ENCODE measurements at regions of chr20 and their contacts with region 1.

Region 1: GRCh38 chr20:15654208-15654645 is 919.0 kb downstream of the KIF16B start:
- DNase-seq: peak in 2 of 10 donors; percentile 26 to 39
- H3K4me3 ChIP-seq: no peak overlapping the region
- H3K27ac ChIP-seq: no peak overlapping the region
- H3K27me3 ChIP-seq: no peaks in the 10 kb centered on the region
- CTCF ChIP-seq: peak in 55 of 56 donors; percentile 24 to 78 (median 64)

Region 2: DNA sequence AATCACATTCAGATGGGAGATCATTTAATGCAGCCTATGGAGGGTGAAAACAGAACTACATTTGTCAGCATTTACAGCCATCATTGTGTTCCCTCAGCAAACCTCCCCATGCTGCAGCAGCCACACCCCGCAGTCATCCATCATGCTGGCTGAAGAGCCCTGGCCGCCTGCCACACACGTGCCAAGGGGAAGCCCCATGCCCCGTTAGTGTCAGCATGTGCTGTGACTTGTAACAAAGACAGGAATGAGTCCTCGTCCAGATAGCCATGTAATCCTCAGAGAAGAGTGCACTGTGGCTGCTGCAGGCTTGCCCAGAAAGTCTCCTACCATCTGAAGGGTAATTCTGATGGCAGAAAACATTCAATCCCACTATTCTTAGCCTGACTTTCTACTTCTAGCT is 178.7 kb before region 1 on chr20:
- intact Hi-C with region 1: no loop called
- DNase-seq: peak in 6 of 10 donors; percentile 16 to 56 (median 38)
- H3K4me3 ChIP-seq: no peak overlapping the region
- H3K27ac ChIP-seq: no peak overlapping the region
- H3K27me3 ChIP-seq: no peaks in the 10 kb centered on the region
- CTCF ChIP-seq: no peak

Region 3: DNA sequence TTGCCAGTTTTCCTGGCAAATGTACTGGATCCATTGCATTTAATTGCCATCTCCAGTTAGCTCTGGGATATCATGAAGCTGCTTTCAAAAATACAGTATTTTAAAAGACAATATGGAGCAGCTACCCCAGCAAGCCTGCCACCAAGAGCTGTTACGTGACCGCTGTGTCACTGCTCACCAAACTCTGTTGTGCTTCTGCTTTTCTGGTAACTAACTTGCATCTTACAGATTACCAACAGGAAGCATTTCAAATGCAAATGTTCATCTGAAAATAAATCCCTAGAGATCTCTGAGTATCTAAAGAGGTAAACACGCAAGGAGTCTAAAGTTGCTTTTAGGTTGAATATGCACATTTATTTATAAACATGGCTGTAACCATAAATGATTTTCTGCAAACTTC is 89.2 kb before region 1 on chr20:
- intact Hi-C with region 1: loop called in 1 of 2 experiments (anchors 5 kb)
- DNase-seq: no peak
- H3K4me3 ChIP-seq: no peak overlapping the region
- H3K27ac ChIP-seq: no peak overlapping the region
- H3K27me3 ChIP-seq: no peaks in the 10 kb centered on the region
- CTCF ChIP-seq: no peak

Region 4: GRCh38 chr20:15799869-15800268 is 145.6 kb after region 1 on chr20:
- intact Hi-C with region 1: loop called in 1 of 2 experiments (anchors 10 kb)
- DNase-seq: no peak
- H3K4me3 ChIP-seq: no peak overlapping the region
- H3K27ac ChIP-seq: no peak overlapping the region
- H3K27me3 ChIP-seq: no peaks in the 10 kb centered on the region
- CTCF ChIP-seq: no peak

Region 5: GRCh38 chr20:15867901-15868300 is 213.7 kb after region 1 on chr20:
- intact Hi-C with region 1: loop called in 1 of 2 experiments (anchors 10 kb)
- DNase-seq: no peak
- H3K4me3 ChIP-seq: no peak overlapping the region
- H3K27ac ChIP-seq: no peak overlapping the region
- H3K27me3 ChIP-seq: no peaks in the 10 kb centered on the region
- CTCF ChIP-seq: peak in 13 of 56 donors; percentile 14 to 51 (median 19)